WTC11 (cell line): ENCODE measurements at regions of chr17 and their contacts with region 1.

Region 1: GRCh38 chr17:17496189-17497064 is at the start of gene RASD1:
- DNase-seq: peak; percentile 82
- ATAC-seq: peak; percentile 75
- H3K4me3 Mint-ChIP-seq: peak within 1 kb of the TSS; percentile 81
- H3K27ac Mint-ChIP-seq: no peak within 1 kb of the TSS
- H3K4me1 Mint-ChIP-seq: peaks cover 41% of the 10 kb centered on the region
- H3K27me3 Mint-ChIP-seq: peaks cover 29% of the 10 kb centered on the region
- CTCF ChIP-seq: peak; percentile 95
- total RNA-seq, gene RASD1: 5.1 to 5.3 TPM (median 5.2 TPM) in 3 replicates

Region 2: DNA sequence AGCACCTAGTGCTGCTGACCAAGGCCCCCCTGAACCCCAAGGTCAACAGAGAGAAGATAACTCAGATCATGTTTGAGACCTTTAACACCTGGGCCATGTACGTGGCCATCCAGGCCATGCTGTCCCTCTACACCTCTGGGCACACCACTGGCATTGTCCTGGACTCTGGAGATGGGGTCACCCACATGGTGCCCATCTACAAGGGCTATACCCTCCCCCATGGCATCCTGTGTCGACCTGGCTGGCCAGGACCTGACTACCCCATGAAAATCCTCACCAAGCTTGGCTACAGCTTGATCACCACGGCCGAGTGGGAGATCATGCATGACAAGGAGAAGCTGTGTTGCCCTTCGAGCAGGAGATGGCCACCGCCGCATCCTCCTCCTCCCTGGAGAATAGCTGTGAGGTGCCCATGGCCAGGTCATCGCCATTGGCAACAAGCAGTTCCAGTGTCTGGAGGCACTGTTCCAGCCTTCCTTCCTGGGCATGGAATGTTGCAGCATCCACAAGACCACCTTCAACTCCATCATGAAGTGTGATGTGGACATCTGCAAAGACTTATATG is 254.3 kb before region 1 on chr17:
- CTCF ChIA-PET with region 1: no interaction called
- POLR2A ChIA-PET with region 1: no interaction called
- DNase-seq: no peak
- ATAC-seq: no peak
- H3K4me3 Mint-ChIP-seq: no peak overlapping the region
- H3K27ac Mint-ChIP-seq: 0 out of 2 replicates have a peak overlapping the region, but pooled peaks have one; percentile 10
- H3K4me1 Mint-ChIP-seq: peaks cover 7% of the 10 kb centered on the region
- H3K27me3 Mint-ChIP-seq: no peaks in the 10 kb centered on the region
- CTCF ChIP-seq: no peak

Region 3: GRCh38 chr17:17366941-17367875 is 129.2 kb before region 1 on chr17:
- CTCF ChIA-PET with region 1: interaction called, 13 read pairs
- POLR2A ChIA-PET with region 1: no interaction called
- DNase-seq: no peak
- ATAC-seq: no peak
- H3K4me3 Mint-ChIP-seq: no peak overlapping the region
- H3K27ac Mint-ChIP-seq: no peak overlapping the region
- H3K4me1 Mint-ChIP-seq: peaks cover 16% of the 10 kb centered on the region
- H3K27me3 Mint-ChIP-seq: no peaks in the 10 kb centered on the region
- CTCF ChIP-seq: no peak

Region 4: DNA sequence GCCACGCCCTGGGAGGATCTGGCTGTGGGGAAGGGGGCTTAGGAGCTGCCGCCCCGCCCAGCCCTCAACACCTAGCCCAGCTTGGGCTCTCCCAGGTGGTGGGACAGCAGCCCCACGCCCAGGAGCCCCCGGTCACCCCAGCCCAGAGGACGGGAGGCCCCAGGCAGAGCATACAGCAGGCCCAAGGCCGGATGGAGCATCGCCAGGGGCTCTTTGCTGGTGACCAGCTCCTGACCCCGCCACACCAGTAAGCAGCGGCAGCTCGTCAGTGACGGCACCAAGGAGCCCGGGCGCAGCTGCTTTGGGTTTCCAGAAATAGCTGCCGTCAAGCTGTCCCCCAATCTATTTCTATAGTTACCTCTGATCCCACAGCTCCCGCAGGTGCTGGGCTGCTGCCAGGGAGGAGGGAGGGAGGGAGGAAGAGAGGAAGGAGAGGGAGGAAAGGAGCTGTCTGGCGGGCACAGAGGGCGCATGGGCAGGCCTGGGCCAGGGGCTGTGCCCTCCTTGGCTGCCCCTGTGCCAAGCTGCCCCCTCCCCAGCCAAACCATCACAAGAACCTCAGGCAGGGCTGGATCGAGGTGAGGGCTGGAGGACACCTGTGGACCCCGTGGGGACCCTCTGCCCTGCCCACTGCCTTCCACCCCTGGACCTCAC is 10.5 kb after region 1 on chr17:
- CTCF ChIA-PET with region 1: interaction called, 42 read pairs
- POLR2A ChIA-PET with region 1: interaction called, 6 read pairs
- DNase-seq: no peak
- ATAC-seq: no peak
- H3K4me3 Mint-ChIP-seq: no peak overlapping the region
- H3K27ac Mint-ChIP-seq: no peak overlapping the region
- H3K4me1 Mint-ChIP-seq: peaks cover 3% of the 10 kb centered on the region; the same call in 1 of the 2 replicates
- H3K27me3 Mint-ChIP-seq: no peaks in the 10 kb centered on the region
- CTCF ChIP-seq: no peak

Region 5: DNA sequence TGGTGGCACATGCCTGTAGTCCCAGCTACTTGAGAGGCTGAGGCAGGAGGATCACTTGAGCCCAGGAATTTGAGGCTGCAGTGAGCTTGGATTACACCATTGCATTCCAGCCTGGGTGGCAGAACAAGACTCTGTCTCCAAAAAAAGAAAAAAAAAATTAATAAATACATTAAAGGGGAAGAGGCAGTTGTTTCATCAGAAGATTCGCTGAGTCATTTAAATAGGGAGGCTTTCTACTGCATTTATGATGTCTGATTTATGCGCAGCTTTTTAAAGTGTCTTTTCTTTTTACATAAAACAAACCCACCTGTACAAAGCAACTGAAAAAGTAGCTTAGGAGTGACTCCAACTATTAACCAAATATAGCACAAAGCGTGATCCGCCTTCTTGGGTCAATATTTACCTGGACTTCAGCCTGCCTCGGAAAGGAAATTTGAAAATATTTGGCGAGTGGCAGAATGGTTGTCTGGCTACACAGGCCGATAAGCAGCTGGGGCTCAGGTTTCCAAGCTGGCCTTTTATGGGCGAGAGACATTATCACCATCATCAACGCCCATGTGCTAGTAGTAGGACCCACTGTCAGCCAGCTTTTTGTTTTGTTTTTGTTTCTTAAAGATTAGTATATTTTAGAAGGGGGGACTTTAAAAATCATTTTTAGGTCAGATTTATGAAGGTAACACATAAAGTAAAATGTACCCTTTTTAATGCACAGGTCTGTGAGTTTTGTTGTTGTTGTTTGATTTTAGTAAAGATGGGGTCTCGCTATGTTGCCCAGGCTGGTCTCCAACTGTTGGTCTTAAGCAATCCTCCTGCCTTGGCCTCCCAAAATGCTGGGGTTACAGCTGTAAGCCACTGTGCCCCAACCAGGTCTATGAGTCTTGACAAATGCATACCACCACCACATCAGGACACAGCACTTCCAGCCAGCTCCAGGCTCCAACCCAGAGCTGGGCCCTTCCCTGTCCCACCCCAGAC is 42.3 kb after region 1 on chr17:
- CTCF ChIA-PET with region 1: interaction called, 14 read pairs
- POLR2A ChIA-PET with region 1: no interaction called
- DNase-seq: no peak
- ATAC-seq: no peak
- H3K4me3 Mint-ChIP-seq: no peak overlapping the region
- H3K27ac Mint-ChIP-seq: no peak overlapping the region
- H3K4me1 Mint-ChIP-seq: peaks cover 4% of the 10 kb centered on the region; the same call in 1 of the 2 replicates
- H3K27me3 Mint-ChIP-seq: no peaks in the 10 kb centered on the region
- CTCF ChIP-seq: no peak

Region 6: DNA sequence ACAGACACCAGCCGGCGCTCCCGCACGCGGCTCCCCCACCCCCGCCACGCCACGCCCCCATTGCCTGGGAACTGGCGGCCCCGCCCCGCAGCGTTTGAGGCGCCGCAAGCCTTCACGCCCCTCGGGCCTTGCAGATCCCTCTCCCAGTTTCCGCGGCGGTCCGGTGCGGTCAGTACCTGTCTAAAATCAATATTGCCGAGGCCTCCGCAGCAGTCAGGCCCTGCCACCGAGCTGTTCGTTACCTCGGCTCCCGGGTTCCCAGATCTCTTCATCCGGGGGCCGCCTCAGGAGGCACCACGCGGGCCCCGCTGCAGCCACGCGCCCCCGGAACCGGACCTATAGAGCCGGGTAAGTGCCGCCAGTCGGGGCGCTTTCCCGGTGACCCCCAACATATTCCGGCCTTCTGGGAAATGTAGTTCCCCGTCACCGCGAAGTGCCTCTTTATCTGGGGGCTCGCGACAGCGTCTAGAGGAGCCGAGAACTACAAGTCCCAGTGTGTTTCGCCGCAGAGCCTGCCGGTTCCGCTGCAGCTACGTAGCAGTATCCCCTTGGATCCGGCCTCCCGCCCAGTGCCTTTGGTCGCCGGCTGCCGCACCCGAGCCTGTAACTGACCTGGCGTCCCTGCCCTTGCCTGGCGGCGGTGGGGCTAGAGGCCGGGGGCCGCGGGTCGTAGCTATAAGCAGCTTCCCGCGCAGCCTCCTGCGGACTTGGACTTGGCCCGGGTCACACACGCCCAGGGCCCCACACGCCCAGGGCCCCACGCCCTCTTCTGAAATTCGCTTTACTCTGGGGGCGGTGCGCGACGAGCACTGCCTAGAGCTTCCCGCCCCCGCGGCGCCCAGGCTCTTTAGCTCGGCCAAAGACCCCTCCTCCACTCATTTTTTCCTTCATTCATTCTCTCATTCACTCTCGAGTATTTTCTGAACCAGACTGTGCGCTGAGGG is 95.2 kb after region 1 on chr17 and contains the start of gene PEMT:
- CTCF ChIA-PET with region 1: interaction called, 14 read pairs
- POLR2A ChIA-PET with region 1: interaction called, 6 read pairs
- DNase-seq: peak; percentile 95
- ATAC-seq: peak; percentile 98
- H3K4me3 Mint-ChIP-seq: peak within 1 kb of the TSS; percentile 95
- H3K27ac Mint-ChIP-seq: peak within 1 kb of the TSS; percentile 96
- H3K4me1 Mint-ChIP-seq: peaks cover 17% of the 10 kb centered on the region
- H3K27me3 Mint-ChIP-seq: no peaks in the 10 kb centered on the region
- CTCF ChIP-seq: no peak
- total RNA-seq, gene PEMT: 51.9 to 54.6 TPM (median 53.1 TPM) in 3 replicates

Region 7: DNA sequence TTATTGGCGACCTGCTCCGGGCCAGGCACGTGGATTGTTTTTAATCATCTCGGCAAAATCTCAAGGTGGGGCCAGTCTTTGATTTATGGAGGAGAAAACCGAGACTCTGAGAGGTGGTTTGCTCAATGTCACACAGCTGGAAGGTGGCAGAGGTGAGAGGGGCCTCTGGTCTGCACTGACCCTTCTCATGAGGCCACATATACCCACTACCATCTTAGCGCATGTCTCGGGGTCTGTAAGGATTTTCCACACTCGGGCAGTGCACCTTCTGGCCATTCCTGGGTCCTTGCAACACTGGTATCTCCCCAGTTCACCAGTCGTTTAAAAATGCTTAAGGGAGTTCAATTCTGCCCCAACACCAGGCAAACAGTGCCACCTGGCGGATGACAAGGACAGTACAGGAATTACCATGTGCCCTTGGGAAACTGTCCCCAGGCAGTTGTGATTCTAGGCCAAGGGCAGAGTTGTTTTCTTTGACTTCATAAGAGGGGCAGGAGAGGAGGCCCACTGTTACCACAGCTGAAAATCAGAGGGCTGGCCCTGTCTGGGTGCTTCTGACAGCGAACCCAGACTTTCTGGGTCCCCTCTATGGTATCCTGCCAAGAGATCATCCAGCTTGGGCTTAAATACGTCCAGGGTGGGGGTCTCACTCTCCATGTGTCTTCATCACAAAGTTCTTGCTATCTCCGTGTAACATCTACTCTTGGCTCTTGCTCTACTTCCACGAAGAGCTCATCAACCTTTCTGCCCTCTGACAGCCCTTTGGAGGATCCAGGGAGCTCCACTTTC is 145.4 kb after region 1 on chr17:
- CTCF ChIA-PET with region 1: interaction called, 49 read pairs
- POLR2A ChIA-PET with region 1: no interaction called
- DNase-seq: peak; percentile 85
- ATAC-seq: peak; percentile 96
- H3K4me3 Mint-ChIP-seq: no peak overlapping the region
- H3K27ac Mint-ChIP-seq: no peak overlapping the region
- H3K4me1 Mint-ChIP-seq: peaks cover 7% of the 10 kb centered on the region
- H3K27me3 Mint-ChIP-seq: no peaks in the 10 kb centered on the region; the same call in 1 of the 2 replicates
- CTCF ChIP-seq: peak; percentile 91